CD4-positive, alpha-beta T cell (primary cell): ENCODE measurements at regions of chr2 and their contacts with region 1.

Region 1: GRCh38 chr2:12716282-12717190 is at the start of gene TRIB2:
- DNase-seq: peak; percentile 85 to 99 (median 92)
- ATAC-seq: peak; percentile 75
- H3K4me3 ChIP-seq: peak within 1 kb of the TSS; percentile 93
- H3K4me3 Mint-ChIP-seq: peak within 1 kb of the TSS; percentile 100
- H3K27ac ChIP-seq: peak within 1 kb of the TSS; percentile 68 to 88
- H3K27ac Mint-ChIP-seq: peak within 1 kb of the TSS; percentile 93
- H3K4me1 ChIP-seq: peaks cover 27% of the 10 kb centered on the region
- H3K4me1 Mint-ChIP-seq: peaks cover 49% of the 10 kb centered on the region
- H3K27me3 ChIP-seq: no peaks in the 10 kb centered on the region
- H3K27me3 Mint-ChIP-seq: no peaks in the 10 kb centered on the region
- CTCF ChIP-seq: peak; percentile 45
- total RNA-seq, gene TRIB2: 91.3 to 102 TPM

Region 2: GRCh38 chr2:11955314-11955713 is 761.2 kb before region 1 on chr2:
- CTCF ChIA-PET with region 1: no interaction called
- POLR2A ChIA-PET with region 1: interaction called, 4 read pairs
- intact Hi-C with region 1: loop called in 1 of 2 experiments (anchors 10 kb)
- DNase-seq: no peak
- ATAC-seq: no peak
- H3K4me3 ChIP-seq: no peak overlapping the region
- H3K4me3 Mint-ChIP-seq: no peak overlapping the region
- H3K27ac ChIP-seq: no peak overlapping the region
- H3K27ac Mint-ChIP-seq: no peak overlapping the region
- H3K4me1 ChIP-seq: no peaks in the 10 kb centered on the region
- H3K4me1 Mint-ChIP-seq: peaks cover 6% of the 10 kb centered on the region
- H3K27me3 ChIP-seq: no peaks in the 10 kb centered on the region
- H3K27me3 Mint-ChIP-seq: peaks cover 29% of the 10 kb centered on the region
- CTCF ChIP-seq: no peak

Region 3: DNA sequence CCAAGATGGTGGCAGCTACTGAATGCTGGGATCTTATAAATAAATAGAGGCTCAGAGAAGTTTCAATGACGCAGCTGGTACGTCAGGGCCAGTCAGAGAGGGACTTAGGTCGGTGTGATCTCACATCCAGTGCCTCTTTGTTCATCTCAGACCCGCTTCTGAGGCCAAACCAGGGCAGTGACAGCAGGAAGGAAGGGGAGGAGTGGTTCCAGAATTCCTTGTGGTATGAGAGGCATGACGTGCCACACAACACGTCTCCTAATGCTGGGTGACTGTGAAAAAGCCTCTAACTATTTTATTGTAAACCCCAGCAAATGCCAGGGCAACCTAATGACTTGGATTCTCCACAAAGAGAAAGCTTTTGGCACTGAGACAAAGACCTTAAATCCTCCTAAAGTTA is 546.8 kb before region 1 on chr2:
- CTCF ChIA-PET with region 1: no interaction called
- POLR2A ChIA-PET with region 1: interaction called, 10 read pairs
- intact Hi-C with region 1: no loop called
- DNase-seq: peak in 9 of 14 experiments; percentile 2 to 74 (median 25)
- ATAC-seq: peak; percentile 88
- H3K4me3 ChIP-seq: no peak overlapping the region
- H3K4me3 Mint-ChIP-seq: no peak overlapping the region
- H3K27ac ChIP-seq: no peak overlapping the region
- H3K27ac Mint-ChIP-seq: peak overlapping the region; percentile 54
- H3K4me1 ChIP-seq: peaks cover 25% of the 10 kb centered on the region
- H3K4me1 Mint-ChIP-seq: peaks cover 53% of the 10 kb centered on the region
- H3K27me3 ChIP-seq: no peaks in the 10 kb centered on the region
- H3K27me3 Mint-ChIP-seq: no peaks in the 10 kb centered on the region
- CTCF ChIP-seq: no peak

Region 4: DNA sequence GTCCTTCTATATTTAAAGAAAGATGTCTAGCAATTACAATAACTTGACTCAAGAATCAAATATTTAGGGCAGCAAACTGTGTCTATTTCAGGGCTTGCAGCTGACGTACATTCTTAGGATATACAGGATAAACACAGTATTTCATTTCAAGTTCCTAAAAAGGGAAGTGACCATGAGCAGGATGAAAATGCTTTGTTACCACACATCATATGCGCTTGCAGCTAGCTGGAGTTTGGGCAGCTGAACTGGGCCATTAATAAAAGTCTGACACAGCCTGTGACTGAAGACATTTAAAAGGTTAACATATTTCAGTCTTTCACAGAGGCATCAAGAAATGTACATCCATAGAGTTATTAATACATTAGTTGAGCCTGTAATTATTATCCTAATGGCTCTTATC is 264.3 kb before region 1 on chr2:
- CTCF ChIA-PET with region 1: no interaction called
- POLR2A ChIA-PET with region 1: interaction called, 20 read pairs
- intact Hi-C with region 1: no loop called
- DNase-seq: peak in 2 of 14 experiments; percentile 19 to 20
- ATAC-seq: no peak
- H3K4me3 ChIP-seq: peak overlapping the region; percentile 23
- H3K4me3 Mint-ChIP-seq: peak overlapping the region; percentile 55
- H3K27ac ChIP-seq: peak overlapping the region in 1 of 2 donors; percentile 67
- H3K27ac Mint-ChIP-seq: peak overlapping the region; percentile 75
- H3K4me1 ChIP-seq: peaks cover 19% of the 10 kb centered on the region
- H3K4me1 Mint-ChIP-seq: peaks cover 54% of the 10 kb centered on the region
- H3K27me3 ChIP-seq: no peaks in the 10 kb centered on the region
- H3K27me3 Mint-ChIP-seq: no peaks in the 10 kb centered on the region
- CTCF ChIP-seq: no peak

Region 5: DNA sequence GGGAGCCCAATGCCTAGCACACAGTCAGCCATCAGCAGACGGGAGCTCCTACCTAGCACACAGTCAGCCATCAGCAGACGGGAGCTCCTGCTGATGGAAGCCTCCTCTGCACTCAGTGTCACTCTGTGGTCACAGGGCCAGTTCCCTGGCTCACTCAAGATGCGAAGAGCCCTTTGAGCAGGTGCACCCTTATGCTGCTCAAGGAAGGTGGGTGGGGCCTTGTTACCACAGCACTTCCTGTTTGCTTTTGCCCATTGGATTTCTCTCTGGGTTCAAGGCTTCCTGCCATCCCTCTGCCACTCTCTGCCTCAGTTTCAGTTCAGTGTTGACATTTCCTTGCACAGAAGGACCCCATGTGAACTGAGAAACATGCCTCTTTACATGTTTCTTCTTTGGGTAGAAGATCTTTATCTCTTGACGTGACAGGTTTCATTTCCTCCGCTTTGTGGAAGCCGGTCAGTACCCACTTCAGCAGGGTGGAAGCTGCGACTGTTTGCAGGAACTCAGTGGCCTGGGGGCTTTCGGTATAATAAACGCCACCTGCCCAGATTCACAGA is 11.8 kb after region 1 on chr2:
- CTCF ChIA-PET with region 1: interaction called, 26 read pairs
- POLR2A ChIA-PET with region 1: interaction called, 73 read pairs
- intact Hi-C with region 1: loop called in 1 of 2 experiments (anchors 1 kb)
- DNase-seq: peak; percentile 24 to 82 (median 55)
- ATAC-seq: peak; percentile 84
- H3K4me3 ChIP-seq: peak overlapping the region; percentile 31
- H3K4me3 Mint-ChIP-seq: peak overlapping the region; percentile 81
- H3K27ac ChIP-seq: peak overlapping the region; percentile 47 to 51
- H3K27ac Mint-ChIP-seq: peak overlapping the region; percentile 81
- H3K4me1 ChIP-seq: peaks cover 85% of the 10 kb centered on the region
- H3K4me1 Mint-ChIP-seq: peaks cover 99% of the 10 kb centered on the region
- H3K27me3 ChIP-seq: no peaks in the 10 kb centered on the region
- H3K27me3 Mint-ChIP-seq: no peaks in the 10 kb centered on the region
- CTCF ChIP-seq: no peak

Region 6: DNA sequence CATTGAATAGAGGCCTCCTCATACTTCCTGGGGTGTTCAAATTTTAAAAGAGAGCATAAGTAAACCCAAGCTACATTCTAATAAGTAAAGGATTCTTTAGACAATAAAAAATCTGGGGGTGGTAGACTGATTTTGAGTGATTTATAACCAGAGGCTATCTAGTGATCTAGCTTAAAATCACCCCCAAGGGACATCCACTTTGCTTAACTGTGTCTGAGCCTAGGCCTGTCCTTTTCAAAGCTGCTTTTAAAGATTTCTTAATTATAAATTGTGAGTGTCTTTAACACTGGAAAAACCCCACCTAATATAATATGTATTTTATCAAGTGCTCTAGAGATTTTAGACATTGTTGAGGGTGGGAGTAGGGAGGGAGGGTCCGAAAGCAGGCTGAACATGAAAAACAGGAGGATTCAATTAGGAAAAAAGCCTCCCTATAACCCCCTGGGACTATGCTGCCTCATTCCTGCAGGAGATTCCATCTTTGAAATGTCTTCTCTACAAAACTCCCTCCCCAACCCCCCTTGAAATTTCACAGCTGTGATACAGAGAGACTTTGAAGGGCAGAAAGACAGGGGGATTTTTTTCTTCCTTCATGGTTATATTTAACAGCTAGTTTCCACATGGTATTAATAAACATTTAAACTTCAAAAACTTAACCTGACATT is 57.7 kb after region 1 on chr2:
- CTCF ChIA-PET with region 1: no interaction called
- POLR2A ChIA-PET with region 1: no interaction called
- intact Hi-C with region 1: no loop called
- DNase-seq: no peak
- ATAC-seq: no peak
- H3K4me3 ChIP-seq: no peak overlapping the region
- H3K4me3 Mint-ChIP-seq: no peak overlapping the region
- H3K27ac ChIP-seq: no peak overlapping the region
- H3K27ac Mint-ChIP-seq: no peak overlapping the region
- H3K4me1 ChIP-seq: no peaks in the 10 kb centered on the region
- H3K4me1 Mint-ChIP-seq: no peaks in the 10 kb centered on the region
- H3K27me3 ChIP-seq: peaks cover 0 to 5% of the 10 kb centered on the region in 2 experiments
- H3K27me3 Mint-ChIP-seq: peaks cover 16% of the 10 kb centered on the region
- CTCF ChIP-seq: no peak

Region 7: DNA sequence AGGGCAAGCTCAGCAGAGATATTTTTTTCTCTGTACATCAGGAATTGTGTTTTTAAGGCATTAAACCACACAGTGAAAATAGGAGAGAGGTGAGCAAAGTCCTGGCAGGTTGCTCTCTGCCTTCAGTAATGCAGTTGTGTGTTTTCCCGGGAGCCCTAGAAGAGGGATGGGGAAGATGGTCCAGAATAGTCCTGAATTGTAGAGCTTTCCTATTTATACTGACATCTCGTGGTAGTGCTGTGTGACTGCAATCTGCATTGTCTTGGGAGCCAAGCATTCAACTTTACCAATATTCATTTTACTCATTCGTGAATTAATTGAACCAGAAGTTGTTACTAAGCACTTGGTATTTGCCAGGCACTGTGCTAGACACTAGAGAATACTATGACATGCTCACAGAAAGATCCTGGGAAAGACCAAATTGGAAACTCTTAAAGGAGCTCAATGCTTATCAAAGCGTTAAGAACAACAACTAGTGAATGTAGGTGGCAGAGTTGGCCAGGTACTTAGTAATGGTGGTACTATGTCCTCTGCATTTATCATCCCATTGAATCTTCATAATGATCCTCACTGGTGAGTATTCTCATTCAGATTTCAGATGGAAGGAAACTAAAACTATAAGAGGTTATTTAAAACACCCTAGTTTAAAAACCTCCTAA is 214.8 kb after region 1 on chr2:
- CTCF ChIA-PET with region 1: interaction called, 12 read pairs
- POLR2A ChIA-PET with region 1: interaction called, 19 read pairs
- intact Hi-C with region 1: loop called (anchors 2 to 5 kb)
- DNase-seq: peak in 4 of 14 experiments; percentile 23 to 44 (median 38)
- ATAC-seq: no peak
- H3K4me3 ChIP-seq: no peak overlapping the region
- H3K4me3 Mint-ChIP-seq: no peak overlapping the region
- H3K27ac ChIP-seq: no peak overlapping the region
- H3K27ac Mint-ChIP-seq: no peak overlapping the region
- H3K4me1 ChIP-seq: no peaks in the 10 kb centered on the region
- H3K4me1 Mint-ChIP-seq: peaks cover 20% of the 10 kb centered on the region
- H3K27me3 ChIP-seq: no peaks in the 10 kb centered on the region
- H3K27me3 Mint-ChIP-seq: peaks cover 5% of the 10 kb centered on the region
- CTCF ChIP-seq: peak; percentile 93